ENCODE measurements at regions of chr5 and their contacts with region 1.

Region 1: GRCh38 chr5:37738057-37738691 is 101.7 kb downstream of the GDNF start:
- DNase-seq: no peak
- H3K4me3 ChIP-seq: no peak overlapping the region
- H3K27ac ChIP-seq: peak overlapping the region; percentile 5 to 60
- H3K4me1 ChIP-seq: peaks cover 0 to 46% (median 20%) of the 10 kb centered on the region in 4 donors
- H3K27me3 ChIP-seq: no peaks in the 10 kb centered on the region
- CTCF ChIP-seq: no peak

Region 2: GRCh38 chr5:36530215-36530614 is 1208.0 kb before region 1 on chr5:
- intact Hi-C with region 1: loop called (anchors 5 kb)
- DNase-seq: no peak
- H3K4me3 ChIP-seq: no peak overlapping the region
- H3K27ac ChIP-seq: no peak overlapping the region
- H3K4me1 ChIP-seq: no peaks in the 10 kb centered on the region
- H3K27me3 ChIP-seq: no peaks in the 10 kb centered on the region
- CTCF ChIP-seq: no peak

Region 3: GRCh38 chr5:37448941-37449340 is 289.2 kb before region 1 on chr5:
- intact Hi-C with region 1: no loop called
- DNase-seq: no peak
- H3K4me3 ChIP-seq: no peak overlapping the region
- H3K27ac ChIP-seq: no peak overlapping the region
- H3K4me1 ChIP-seq: no peaks in the 10 kb centered on the region
- H3K27me3 ChIP-seq: no peaks in the 10 kb centered on the region
- CTCF ChIP-seq: no peak